Posterior cingulate gyrus (tissue), 11 donors: ENCODE measurements at regions of chr15 and their contacts with region 1.

Region 1: GRCh38 chr15:90886041-90886614 is 1.8 kb downstream of the FES start:
- DNase-seq: peak in 9 of 10 donors; percentile 63 to 96 (median 80)

Region 2: DNA sequence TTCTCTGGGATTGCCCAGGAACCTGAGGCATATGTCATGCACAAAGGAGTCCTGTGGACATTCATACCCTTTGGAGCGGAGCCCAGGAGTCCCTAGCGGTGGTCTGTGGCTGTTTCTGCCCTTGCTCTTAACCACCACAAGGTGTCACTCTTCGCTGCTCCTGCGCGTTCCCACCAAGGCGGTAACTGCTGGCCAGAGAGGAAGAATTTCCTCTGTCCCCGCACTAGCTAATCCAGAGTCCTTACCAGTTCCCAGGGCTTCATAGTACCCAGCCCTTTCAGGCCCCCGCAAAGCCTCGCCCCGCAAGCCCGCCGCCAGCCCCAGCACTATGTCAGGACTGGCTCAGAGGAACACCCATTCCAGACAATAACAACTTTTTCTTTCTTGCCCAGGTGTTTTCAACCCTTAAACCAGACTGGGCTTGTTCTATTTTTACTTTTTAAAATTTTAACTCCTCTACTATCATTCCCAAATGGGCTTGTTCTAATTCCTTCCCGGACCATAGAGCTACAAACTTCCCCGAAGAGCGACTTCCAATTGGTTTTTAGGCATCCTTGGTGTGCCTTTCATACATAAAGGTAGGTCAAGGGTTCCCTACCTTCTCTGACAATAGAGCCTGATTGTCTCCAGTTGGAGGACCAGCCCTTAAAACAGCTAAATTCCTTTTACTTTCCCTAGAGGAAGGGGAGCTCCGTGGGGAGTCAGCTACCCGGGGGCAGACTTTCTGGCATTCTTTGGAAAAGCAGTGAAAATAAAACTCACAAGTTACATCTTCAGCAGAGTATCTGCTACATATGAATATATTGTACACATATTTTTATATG is 565.9 kb before region 1 on chr15:
- intact Hi-C with region 1: loop called (anchors 5 kb)
- DNase-seq: peak; percentile 57 to 97 (median 76)

Region 3: DNA sequence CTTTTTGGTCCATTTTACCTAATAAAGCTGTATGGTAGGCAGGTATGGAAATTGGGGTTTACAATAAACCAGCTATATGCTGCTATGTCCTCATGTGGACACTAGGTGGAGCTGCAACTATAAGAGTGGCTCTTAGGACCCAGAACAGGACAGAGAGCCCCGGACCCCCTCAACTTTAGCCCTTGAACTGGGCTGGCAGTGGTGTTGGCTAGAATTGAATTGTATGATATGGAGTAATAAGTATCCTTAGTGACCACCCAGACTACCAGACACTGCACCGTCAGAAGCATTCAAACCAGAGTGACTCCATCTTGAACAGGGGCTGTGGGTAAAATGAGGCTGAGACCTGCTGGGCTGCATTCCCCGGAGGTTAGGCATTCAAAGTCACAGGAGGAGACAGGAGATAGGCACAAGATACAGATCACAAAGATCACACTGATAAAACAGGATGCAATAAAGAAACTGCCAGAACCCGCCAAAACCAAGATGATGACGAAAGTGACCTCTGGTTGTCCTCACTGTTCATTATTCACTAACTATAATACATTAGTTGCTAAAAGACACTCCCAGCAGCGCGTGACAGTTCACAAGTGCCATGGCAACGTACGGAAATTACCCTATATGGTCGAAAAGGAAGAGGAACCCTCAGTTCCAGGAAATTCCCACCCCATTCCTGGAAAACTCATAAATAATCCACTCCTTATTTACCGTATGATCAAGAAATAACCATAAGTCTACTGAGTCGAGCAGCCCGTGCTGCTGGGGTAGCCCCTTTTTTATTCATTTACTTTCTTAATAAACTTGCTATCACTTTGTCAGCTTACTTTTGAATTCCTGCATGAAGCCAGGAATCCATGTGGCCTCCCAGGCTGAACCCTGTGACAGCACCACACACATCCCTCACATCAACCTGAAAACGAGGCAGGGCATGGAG is 237.7 kb before region 1 on chr15:
- intact Hi-C with region 1: loop called (anchors 1 kb)
- DNase-seq: peak in 5 of 10 donors; percentile 38 to 82 (median 61)

Region 4: GRCh38 chr15:90716976-90717821 is 168.9 kb before region 1 on chr15 and contains the start of gene BLM:
- intact Hi-C with region 1: loop called (anchors 5 kb)
- DNase-seq: peak; percentile 92 to 100 (median 96)